ENCODE measurements at regions of chr15 and their contacts with region 1.

Region 1: GRCh38 chr15:52679232-52680040 is at the start of gene ATOSA:
- DNase-seq: peak; percentile 91
- H3K4me3 Mint-ChIP-seq: peak within 1 kb of the TSS; percentile 91
- H3K27ac Mint-ChIP-seq: peak within 1 kb of the TSS; percentile 100
- H3K4me1 Mint-ChIP-seq: peaks cover 38% of the 10 kb centered on the region
- H3K27me3 Mint-ChIP-seq: no peaks in the 10 kb centered on the region
- total RNA-seq, gene ATOSA: 14.8 and 16.5 TPM in 2 replicates

Region 2: GRCh38 chr15:52005748-52006701 is 673.4 kb before region 1 on chr15:
- intact Hi-C with region 1: loop called (anchors 5 kb)
- DNase-seq: no peak
- H3K4me3 Mint-ChIP-seq: peak overlapping the region; percentile 28
- H3K27ac Mint-ChIP-seq: peak overlapping the region; percentile 80
- H3K4me1 Mint-ChIP-seq: peaks cover 70% of the 10 kb centered on the region
- H3K27me3 Mint-ChIP-seq: no peaks in the 10 kb centered on the region

Region 3: GRCh38 chr15:52261498-52262242 is 417.8 kb before region 1 on chr15:
- intact Hi-C with region 1: loop called (anchors 1 kb)
- DNase-seq: peak; percentile 63
- H3K4me3 Mint-ChIP-seq: peak overlapping the region; percentile 68
- H3K27ac Mint-ChIP-seq: peak overlapping the region; percentile 90
- H3K4me1 Mint-ChIP-seq: peaks cover 44% of the 10 kb centered on the region
- H3K27me3 Mint-ChIP-seq: no peaks in the 10 kb centered on the region

Region 4: DNA sequence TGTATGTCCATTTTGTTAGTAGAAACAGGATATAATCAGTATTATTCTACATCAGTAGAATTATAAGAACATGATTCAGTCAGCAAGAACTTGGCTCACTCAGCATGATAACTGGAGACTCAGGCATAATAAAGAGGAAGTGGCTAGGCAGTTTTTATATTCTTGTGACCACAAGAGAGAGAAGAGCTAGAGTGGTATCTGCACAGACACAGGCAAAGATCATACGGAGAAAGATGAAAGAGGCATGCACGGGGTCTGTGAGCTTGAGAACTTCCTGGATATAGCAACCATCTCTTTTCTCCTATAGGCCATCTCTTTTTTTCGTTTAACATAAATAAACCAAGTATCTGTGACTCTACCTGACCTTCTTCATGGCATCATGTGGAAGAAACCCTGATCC is 197.5 kb before region 1 on chr15:
- intact Hi-C with region 1: loop called (anchors 5 kb)
- DNase-seq: peak; percentile 49
- H3K4me3 Mint-ChIP-seq: peak overlapping the region; percentile 49
- H3K27ac Mint-ChIP-seq: peak overlapping the region; percentile 81
- H3K4me1 Mint-ChIP-seq: peaks cover 63% of the 10 kb centered on the region
- H3K27me3 Mint-ChIP-seq: peaks cover 5% of the 10 kb centered on the region

Region 5: DNA sequence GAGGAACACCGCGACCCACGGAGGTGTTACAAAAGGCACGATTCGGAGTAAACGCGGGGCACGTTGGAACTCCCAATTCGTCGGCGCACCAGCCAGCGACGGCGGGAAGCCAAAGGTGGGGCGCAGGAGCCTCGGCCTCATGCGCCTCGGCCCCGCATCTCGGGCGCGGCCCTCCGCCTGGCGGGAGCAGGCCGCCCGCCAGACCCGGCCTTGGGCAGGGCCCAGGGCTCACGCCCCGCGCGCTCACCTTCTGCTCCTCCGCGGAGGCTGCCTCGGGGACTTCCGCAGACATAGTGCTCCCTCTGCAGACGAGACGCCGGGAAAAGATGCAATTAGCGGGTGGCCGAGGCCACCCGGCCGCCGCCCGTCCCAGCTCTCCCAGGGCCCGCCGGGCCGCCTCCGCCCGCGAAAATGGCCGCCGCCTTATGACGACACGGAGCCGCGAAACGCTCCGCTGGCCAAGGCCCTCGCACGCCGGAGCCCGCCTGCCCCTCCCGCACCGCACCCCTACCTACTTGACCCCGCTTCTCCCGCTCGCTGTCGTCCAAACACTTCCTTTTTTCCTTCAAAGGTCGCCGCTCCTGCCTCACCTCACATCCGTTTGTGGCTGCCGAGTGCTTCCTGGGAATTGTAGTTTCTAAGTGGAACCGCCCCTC is 110.7 kb before region 1 on chr15 and contains the start of gene ARPP19:
- intact Hi-C with region 1: loop called (anchors 2 kb)
- DNase-seq: peak; percentile 75
- H3K4me3 Mint-ChIP-seq: peak within 1 kb of the TSS; percentile 92
- H3K27ac Mint-ChIP-seq: peak within 1 kb of the TSS; percentile 99
- H3K4me1 Mint-ChIP-seq: peaks cover 43% of the 10 kb centered on the region
- H3K27me3 Mint-ChIP-seq: peaks cover 2% of the 10 kb centered on the region
- total RNA-seq, gene ARPP19: 195 and 216 TPM in 2 replicates

Region 6: DNA sequence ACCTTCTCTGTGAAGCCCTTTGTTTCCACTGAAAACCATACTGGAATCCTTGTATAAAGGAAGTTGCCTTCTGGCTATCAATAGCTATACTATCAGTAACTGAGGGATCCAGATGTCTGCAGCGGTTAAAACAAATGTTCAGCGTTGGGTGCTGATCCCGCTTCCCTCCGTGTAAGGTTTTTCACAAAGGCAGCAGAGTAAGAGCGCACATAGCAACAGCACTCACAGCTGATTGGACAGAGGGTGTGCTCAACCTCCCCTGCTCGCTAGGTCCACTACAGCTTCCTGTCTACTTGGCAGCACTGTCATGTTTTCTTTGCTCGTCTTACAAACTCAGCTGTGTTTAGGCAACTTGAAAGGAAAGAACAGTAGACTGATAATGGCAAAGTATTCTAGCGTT is 27.6 kb before region 1 on chr15:
- intact Hi-C with region 1: no loop called
- DNase-seq: peak; percentile 15
- H3K4me3 Mint-ChIP-seq: peak overlapping the region; percentile 54
- H3K27ac Mint-ChIP-seq: no peak overlapping the region
- H3K4me1 Mint-ChIP-seq: peaks cover 9% of the 10 kb centered on the region
- H3K27me3 Mint-ChIP-seq: no peaks in the 10 kb centered on the region